Activated T-helper 2 cell treated with anti-CD3 and anti-CD28 coated beads, Interferon-gamma antibody, Interleukin-2, Interleukin-4, amounts not matched to agents 10 μg/mL and 5 μg/mL and 100 μg/mL, durations not matched to agents 14 hours and 24 hours and 36 hours (primary cell): ENCODE measurements at regions of chr10 and their contacts with region 1.

Region 1: DNA sequence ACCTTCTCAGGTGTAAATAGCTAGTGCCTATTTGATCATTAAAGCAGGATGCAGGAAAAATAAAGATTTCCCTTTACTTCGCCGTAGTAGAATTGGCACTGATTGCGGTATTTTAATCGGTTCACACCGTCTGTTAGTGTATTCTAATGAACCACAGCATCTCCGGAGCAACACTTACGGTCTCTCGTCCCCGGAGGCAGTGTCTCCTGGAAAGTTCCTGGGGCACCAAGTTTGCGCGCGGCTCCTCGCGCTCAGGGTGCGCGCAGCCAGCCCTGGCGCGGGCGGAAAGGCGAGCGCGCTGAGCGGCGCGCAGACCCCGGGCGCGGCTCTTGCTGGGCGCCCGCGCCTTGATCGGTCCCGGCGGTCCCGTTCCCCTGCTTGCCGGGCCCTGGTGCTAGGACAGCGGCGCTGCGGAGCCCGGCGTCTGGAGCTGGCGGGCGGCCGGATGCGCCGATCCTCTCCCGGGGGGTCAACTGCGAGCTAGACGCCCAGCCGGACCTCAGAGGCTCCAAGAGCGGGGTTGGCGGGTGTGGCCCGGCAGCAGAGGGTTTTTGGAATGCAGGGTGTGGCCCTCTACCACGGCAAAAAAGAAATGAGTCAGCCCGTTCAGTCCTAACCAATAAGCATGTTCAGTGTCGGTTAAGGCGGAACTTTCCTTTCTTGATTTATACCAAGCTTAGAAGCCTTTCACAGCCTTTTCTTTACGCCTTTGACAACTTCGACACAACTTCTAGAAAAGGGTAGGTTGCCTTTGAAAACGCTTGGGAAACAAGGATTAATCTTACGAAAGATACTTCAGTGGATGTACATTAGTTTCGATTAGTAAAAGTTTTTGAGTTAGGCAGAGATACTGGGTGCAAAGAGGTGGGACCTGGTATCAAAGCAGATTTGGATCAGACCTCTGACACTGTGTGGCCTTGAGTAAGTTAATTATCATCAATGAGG is 166.8 kb upstream of the ASAH2 start:
- DNase-seq: peak; percentile 68
- H3K4me3 Mint-ChIP-seq: peak overlapping the region; percentile 85
- H3K27ac Mint-ChIP-seq: peak overlapping the region; percentile 77
- H3K4me1 Mint-ChIP-seq: peaks cover 50% of the 10 kb centered on the region
- H3K27me3 Mint-ChIP-seq: no peaks in the 10 kb centered on the region

Region 2: DNA sequence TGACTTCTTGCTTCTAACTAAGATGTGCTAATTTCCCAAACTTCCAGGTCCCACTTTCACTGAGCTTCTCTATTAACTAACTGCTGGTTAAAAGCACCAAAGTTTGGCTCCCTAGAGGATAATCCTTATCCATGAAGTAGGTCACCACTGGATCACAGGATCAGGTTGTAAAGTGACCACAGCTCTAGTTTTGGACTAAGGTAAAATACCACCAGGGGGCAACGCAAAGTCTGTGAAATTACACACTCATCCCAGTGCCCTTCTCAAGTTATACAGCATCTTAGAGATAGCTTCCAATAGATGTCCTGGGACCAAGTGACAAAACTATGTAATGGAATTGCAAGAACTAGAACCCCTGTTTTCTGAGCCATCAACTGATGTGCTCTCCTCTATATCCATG is 50.4 kb before region 1 on chr10:
- intact Hi-C with region 1: loop called (anchors 5 kb)
- DNase-seq: no peak
- H3K4me3 Mint-ChIP-seq: no peak overlapping the region
- H3K27ac Mint-ChIP-seq: no peak overlapping the region
- H3K4me1 Mint-ChIP-seq: peaks cover 17% of the 10 kb centered on the region
- H3K27me3 Mint-ChIP-seq: no peaks in the 10 kb centered on the region